ENCODE measurements at regions of chr7 and their contacts with region 1.

Region 1: DNA sequence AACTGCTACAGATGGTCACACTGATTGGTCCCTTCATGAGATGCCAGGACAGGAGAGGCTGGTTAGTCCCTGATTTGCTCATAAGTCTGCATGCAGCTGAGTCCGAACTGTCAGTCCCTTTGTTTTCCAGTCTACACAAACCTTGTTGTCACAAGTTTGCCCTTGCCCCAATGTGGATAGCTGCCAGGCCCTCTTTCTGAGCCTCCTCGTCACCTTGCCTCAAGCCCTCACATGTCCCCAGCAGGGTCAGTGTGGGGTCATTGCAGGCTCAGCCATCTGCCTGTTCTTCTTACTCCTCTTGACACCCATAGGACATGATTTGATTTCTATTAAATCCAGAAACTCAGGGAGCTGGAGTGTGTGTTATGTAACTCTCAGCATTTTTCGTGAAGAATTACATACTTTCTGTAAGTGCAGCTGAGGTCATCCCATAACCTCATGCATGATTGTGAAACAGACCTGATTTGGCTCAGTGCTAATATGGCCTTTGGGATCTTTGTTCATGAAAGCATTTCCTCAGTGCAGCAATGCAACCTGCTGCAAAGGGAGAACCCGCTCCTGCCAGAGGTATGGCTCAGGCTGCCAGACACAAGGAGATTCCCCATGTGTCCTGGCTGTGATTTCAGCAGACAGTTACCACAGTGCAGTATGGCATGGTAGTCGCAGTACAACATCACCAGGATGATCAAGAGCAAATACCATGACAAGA is 70.0 kb upstream of the ZMIZ2 start:
- DNase-seq: peak; percentile 90
- H3K4me3 ChIP-seq: no peak overlapping the region
- H3K27ac ChIP-seq: peak overlapping the region; percentile 86
- H3K4me1 ChIP-seq: peaks cover 26% of the 10 kb centered on the region
- H3K27me3 ChIP-seq: no peaks in the 10 kb centered on the region

Region 2: GRCh38 chr7:44727158-44727933 is 48.7 kb after region 1 on chr7:
- in situ Hi-C with region 1: loop called (anchors 5 kb)
- DNase-seq: peak; percentile 87
- H3K4me3 ChIP-seq: peak overlapping the region; percentile 13
- H3K27ac ChIP-seq: peak overlapping the region; percentile 93
- H3K4me1 ChIP-seq: peaks cover 20% of the 10 kb centered on the region
- H3K27me3 ChIP-seq: no peaks in the 10 kb centered on the region

Measured in GM23248 (cell line).